Heart left ventricle (tissue), 16 donors: ENCODE measurements at regions of chr9 and their contacts with region 1.

Region 1: GRCh38 chr9:117835798-117836197 is 131.6 kb downstream of the TLR4 start:
- DNase-seq: no peak
- ATAC-seq: no peak
- H3K4me3 ChIP-seq: no peak overlapping the region
- H3K27ac ChIP-seq: no peak overlapping the region
- H3K4me1 ChIP-seq: no peaks in the 10 kb centered on the region
- H3K27me3 ChIP-seq: no peaks in the 10 kb centered on the region
- CTCF ChIP-seq: no peak
- POLR2A ChIP-seq: no peak

Region 2: GRCh38 chr9:117887383-117887782 is 51.6 kb after region 1 on chr9:
- intact Hi-C with region 1: loop called in 1 of 10 experiments (anchors 10 kb)
- DNase-seq: no peak
- ATAC-seq: no peak
- H3K4me3 ChIP-seq: no peak overlapping the region
- H3K27ac ChIP-seq: no peak overlapping the region
- H3K4me1 ChIP-seq: no peaks in the 10 kb centered on the region
- H3K27me3 ChIP-seq: no peaks in the 10 kb centered on the region
- CTCF ChIP-seq: no peak
- POLR2A ChIP-seq: no peak

Region 3: DNA sequence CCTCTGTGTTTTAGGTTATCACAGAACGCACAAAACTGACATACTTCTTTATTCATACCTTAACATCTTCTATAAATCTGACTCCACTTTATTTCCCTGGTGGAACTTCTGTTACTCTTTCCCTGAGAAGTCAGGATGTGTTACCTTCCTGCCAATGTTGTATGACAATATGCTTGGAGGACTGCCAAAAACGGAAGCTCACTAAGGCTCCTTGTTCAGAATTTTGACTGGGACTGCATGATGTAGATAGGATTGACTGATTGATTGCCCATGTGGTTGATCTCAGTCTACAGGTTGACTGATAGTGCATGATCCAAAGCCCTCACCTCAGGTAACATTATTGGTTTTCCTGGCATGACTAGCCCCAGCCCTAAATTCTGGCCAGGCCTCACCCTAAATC is 187.8 kb after region 1 on chr9:
- intact Hi-C with region 1: no loop called
- DNase-seq: peak in 1 of 5 donors; percentile 10
- ATAC-seq: peak in 1 of 4 donors; percentile 78
- H3K4me3 ChIP-seq: no peak overlapping the region
- H3K27ac ChIP-seq: no peak overlapping the region
- H3K4me1 ChIP-seq: no peaks in the 10 kb centered on the region
- H3K27me3 ChIP-seq: no peaks in the 10 kb centered on the region
- CTCF ChIP-seq: no peak
- POLR2A ChIP-seq: no peak